ENCODE measurements at regions of chr16 and their contacts with region 1.

Region 1: GRCh38 chr16:79451196-79451816 is 149.2 kb downstream of the MAF start:
- DNase-seq: no peak
- ATAC-seq: no peak
- H3K4me3 ChIP-seq: no peak overlapping the region
- H3K27ac ChIP-seq: no peak overlapping the region
- H3K4me1 ChIP-seq: no peaks in the 10 kb centered on the region
- H3K27me3 ChIP-seq: no peaks in the 10 kb centered on the region
- CTCF ChIP-seq: no peak

Region 2: DNA sequence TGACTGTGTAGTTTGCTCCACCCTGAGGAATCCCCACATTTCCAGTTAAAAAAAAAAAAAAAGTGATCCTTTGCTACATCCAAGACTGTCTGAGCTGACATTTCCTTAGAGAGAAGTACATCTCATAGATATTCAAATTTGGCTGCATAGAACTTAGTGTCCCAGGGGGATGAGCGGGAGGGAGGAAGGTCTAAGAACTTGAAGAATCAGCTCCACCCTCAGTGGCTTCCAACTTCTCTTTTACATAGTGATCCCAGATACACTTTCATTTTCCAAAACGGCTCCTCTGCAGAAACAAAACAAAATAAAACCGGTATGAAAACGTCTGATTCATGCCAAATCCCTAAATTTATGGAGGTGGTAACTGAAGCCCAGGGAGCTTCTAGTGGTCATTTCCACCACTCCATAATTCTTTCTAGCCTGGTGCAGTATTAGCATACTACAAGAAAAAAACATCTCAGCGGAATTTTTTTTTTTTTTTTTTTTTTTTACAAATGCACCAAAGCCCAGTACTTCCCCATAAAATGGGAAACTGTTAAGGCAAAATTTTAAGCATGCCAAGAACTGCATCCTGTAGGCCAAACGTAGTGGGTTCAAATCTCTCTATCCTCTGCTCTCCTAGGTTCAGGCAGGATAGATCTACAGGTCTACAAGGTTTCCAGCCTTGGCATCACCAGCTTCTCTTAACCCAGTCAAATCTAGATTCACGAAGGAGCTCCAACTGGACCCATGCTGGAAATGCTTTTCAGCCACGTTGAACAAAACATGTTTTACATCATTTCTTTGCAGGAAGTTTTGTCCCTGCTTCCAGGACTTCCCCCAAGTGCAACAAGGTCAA is 120.0 kb after region 1 on chr16:
- intact Hi-C with region 1: loop called in 1 of 2 experiments (anchors 5 kb)
- DNase-seq: no peak
- ATAC-seq: peak in 3 of 4 donors; percentile 28 to 48 (median 35)
- H3K4me3 ChIP-seq: peak overlapping the region; percentile 34
- H3K27ac ChIP-seq: no peak overlapping the region
- H3K4me1 ChIP-seq: peaks cover 15% of the 10 kb centered on the region
- H3K27me3 ChIP-seq: no peaks in the 10 kb centered on the region
- CTCF ChIP-seq: no peak

Measured in psoas muscle (tissue), 8 donors.